ENCODE measurements at regions of chr10 and their contacts with region 1.

Region 1: DNA sequence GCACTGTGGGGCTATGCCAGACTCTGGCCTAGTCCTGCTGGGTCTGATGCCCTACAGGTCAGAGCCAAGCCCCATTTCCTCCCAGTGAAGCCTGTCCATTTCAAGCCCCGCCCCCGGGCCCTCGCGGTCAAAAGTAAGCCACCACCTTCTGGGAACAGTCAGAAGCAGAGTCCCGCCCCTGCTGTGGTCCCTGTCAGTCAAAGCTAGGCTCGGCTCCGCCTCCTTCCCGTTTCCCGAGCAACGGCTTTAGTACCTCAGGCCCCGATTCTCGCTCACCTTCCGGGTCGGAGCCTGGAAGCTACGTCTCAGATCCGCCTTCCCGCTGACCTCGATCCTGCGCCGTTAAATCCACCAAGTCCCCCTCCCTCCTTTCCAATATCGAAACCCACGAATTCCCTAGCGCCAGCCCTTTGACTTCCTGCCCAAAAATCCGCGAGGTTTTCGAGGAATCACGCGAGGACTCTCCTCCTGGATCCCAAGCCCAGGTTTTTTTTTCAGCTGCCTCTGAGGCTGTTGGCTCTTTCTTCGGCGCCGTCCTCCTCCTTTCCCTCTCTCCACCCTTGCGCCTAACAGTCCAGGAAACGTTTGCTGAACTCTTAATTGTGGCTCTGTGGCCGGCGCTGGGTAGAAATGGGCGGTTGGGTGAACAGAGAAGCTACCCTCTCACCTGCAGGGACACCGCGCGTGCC is 11.8 kb downstream of the SFXN3 start:
- DNase-seq: peak; percentile 98
- ATAC-seq: peak; percentile 94

Region 2: DNA sequence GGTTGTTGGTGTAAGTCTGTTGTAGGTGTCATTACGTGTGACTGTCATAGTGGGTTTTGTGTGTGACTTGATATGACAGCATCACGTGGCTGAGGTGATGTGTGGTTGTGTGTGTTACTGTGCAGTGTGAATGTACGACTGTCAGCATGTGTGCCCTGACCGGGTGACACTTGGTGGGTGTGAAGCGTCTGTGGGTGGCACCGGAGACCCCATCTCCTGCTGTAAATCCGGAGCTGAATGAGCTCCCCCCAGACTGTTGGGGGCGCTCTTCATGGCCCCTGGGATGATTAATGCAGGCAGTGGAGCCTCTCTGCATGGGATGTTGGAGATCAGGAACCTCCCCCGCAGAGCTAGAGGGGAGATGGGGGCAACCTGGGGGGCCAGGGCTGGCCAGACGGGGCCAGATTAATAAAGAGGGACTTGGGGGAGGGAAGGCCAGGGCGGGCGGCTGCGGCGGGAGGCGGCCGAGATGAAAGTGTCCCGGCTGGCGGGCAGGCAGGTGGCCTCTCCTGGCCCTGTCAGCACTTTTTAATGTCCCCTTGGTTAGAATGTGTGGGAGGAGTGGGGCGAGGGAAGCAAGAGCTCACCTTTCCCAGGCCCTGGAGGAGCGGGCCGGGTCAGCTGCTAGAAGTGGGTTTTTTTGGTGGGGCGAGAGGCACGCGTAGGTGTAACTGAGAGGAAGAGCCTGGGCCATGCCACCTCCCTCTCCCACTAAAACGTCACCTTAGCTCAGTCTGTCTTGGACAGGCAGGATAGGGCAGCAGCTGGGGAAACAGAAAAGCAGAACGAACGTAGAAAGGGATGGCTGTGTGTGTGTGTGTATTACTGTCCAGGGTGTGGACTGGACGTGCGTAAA is 473.0 kb before region 1 on chr10:
- intact Hi-C with region 1: no loop called
- DNase-seq: no peak
- ATAC-seq: no peak

Region 3: DNA sequence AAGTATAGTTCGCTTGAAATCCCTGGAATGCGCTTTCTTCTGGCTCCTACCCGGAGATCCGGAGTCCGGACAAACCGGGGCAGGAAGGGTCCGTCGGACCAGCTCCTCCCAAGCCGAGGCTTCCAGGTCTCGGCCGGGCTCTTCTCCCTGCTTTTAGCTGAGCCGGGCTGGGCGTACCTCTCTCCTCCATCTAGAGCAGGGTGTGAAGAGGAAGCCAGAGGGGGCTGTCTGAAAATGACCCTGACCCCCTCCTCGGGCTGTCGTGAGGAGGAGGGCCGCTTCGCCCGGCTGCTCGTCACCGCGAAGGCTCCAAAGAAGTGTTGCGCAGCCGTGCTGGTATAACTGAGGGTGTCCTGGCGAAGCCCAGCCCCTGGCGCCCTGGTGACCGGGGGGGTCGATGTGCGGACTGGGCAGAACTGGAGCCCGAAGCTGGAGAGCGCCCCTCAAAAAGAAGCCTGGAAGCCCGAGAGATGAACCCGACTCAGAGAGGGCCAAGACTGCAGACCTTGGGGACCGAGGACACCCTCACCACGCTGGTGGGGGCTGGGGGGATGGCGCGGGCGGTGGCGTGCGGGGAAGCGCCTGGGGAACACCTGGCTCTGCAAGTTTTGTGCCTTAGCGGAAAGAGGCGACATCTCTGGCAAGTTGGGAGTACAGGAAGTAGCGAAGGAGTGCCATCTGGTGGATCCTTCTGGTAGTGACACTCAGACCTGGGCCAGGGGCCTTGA is 24.7 kb after region 1 on chr10:
- intact Hi-C with region 1: loop called (anchors 2 kb)
- DNase-seq: no peak
- ATAC-seq: peak; percentile 45

Region 4: DNA sequence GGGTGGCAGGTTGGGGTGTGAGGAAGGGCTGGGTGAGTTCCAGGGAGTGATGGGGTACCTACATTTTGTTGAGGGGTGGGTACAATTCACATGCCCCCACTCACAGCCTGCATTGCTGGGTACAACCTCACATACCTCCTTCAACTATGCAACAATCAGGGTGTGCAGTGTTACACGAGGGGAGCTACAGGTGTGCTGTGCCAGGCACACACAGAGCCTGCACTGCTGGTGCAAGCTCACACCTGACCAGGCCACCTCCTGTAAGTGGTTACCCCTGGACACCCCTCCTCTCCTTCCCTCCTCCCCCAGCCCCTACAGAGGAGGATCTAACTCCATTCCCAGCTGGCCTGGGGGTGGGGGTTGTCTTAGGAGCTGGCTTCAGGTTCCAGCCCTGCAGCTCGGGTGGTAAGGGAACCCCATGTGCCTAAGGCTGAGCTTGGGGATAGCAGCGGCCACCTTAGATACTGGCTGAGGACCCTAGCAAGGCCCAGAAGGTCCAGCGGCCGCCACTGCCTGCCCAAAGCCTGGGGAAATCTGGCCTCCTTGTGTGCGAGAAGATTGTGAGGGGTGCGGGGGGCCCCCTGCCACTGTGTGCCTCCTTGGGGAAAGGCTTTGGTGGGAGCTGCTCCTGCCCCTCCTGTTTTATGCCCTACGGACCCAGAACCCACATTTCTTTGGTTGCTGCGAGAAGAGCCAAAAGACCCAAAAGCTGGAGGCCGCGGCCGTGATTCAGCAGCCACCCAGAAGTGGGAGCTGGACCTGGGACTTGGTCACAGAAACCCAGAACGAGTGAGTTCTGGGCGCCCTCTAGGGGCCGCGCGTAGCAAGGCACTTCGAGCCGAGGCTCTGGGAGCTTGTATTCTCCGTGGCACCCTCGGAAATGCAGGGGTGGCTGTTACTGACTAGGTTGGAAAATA is 99.1 kb after region 1 on chr10:
- intact Hi-C with region 1: loop called (anchors 2 kb)
- DNase-seq: peak; percentile 85
- ATAC-seq: peak; percentile 87